K562 (cell line): ENCODE measurements at regions of chr7 and their contacts with region 1.

Region 1: DNA sequence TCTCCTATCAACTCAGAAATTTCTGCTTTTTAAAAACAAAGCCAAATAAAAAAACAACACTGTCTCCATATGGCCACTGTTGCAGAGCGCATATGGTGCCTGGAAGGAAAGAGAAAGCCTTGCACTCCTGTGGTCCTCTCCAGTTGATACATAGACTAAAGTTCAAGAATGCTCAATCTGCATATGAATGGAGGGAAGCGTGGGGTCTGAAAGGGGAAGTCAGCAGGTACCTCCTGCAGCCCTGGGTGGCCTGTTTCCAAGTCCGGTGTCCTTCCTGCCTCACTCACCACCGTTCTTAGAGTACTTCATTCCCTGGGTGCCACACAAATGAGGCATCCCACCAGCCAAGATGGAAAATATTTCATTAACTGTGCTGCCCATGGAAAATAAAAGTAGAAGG is 138.3 kb upstream of the PALS2 start:
- DNase-seq: no peak
- ATAC-seq: no peak
- H3K4me3 ChIP-seq: no peak overlapping the region
- H3K27ac ChIP-seq: no peak overlapping the region
- H3K4me1 ChIP-seq: no peaks in the 10 kb centered on the region
- H3K27me3 ChIP-seq: peaks cover 0 to 9% of the 10 kb centered on the region in 2 experiments; a peak in 2 of 5 replicates
- CTCF ChIP-seq: no peak
- EP300 ChIP-seq: no peak
- POLR2A ChIP-seq: no peak
- RAD21 ChIP-seq: no peak

Region 2: GRCh38 chr7:23586159-23586558 is 848.8 kb before region 1 on chr7:
- CTCF ChIA-PET with region 1: no interaction called
- POLR2A ChIA-PET with region 1: no interaction called
- in situ Hi-C with region 1: loop called (anchors 5 kb)
- intact Hi-C with region 1: no loop called
- DNase-seq: no peak
- ATAC-seq: no peak
- H3K4me3 ChIP-seq: no peak overlapping the region
- H3K27ac ChIP-seq: no peak overlapping the region
- H3K4me1 ChIP-seq: peaks cover 0 to 6% of the 10 kb centered on the region in 2 experiments; a peak in 2 of 5 replicates
- H3K27me3 ChIP-seq: no peaks in the 10 kb centered on the region
- CTCF ChIP-seq: no peak
- EP300 ChIP-seq: no peak
- POLR2A ChIP-seq: no peak
- RAD21 ChIP-seq: no peak

Region 3: GRCh38 chr7:24411226-24411625 is 23.7 kb before region 1 on chr7:
- CTCF ChIA-PET with region 1: no interaction called
- POLR2A ChIA-PET with region 1: no interaction called
- in situ Hi-C with region 1: no loop called
- intact Hi-C with region 1: no loop called
- DNase-seq: no peak
- ATAC-seq: no peak
- H3K4me3 ChIP-seq: no peak overlapping the region
- H3K27ac ChIP-seq: no peak overlapping the region
- H3K4me1 ChIP-seq: no peaks in the 10 kb centered on the region
- H3K27me3 ChIP-seq: no peaks in the 10 kb centered on the region; a peak in 1 of 5 replicates
- CTCF ChIP-seq: no peak
- EP300 ChIP-seq: no peak
- POLR2A ChIP-seq: no peak
- RAD21 ChIP-seq: no peak